Mammary epithelial cell (primary cell): ENCODE measurements at regions of chrX and their contacts with region 1.

Region 1: DNA sequence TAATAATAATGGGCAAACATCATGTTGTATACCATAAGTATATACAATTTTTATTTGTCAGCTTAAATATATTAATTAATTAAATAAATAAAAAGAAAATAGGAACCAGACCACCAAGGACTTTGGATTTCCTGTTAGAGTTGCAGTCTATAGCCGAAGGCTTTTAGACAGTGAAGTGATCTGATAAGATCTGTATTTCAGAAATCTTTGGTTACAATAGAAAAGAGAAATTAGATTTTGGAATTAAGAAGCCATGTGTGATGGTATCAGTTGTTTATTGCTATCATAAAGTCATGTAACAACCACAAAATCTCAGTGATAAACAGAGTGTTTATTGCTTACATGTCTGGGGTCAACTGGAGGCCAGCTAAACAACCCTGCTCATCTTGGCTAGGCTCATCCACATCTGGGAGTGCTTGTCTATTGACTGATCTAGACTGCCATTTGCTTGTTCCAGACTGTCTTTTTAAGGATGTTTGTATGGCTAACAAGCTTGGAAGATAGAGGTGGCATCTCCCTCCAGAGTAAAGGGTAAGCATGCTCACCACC is 142.1 kb upstream of the USP9X start:
- DNase-seq: no peak
- H3K4me3 ChIP-seq: no peak overlapping the region
- H3K27ac ChIP-seq: no peak overlapping the region
- H3K4me1 ChIP-seq: peaks cover 6% of the 10 kb centered on the region
- H3K27me3 ChIP-seq: no peaks in the 10 kb centered on the region
- CTCF ChIP-seq: no peak

Region 2: DNA sequence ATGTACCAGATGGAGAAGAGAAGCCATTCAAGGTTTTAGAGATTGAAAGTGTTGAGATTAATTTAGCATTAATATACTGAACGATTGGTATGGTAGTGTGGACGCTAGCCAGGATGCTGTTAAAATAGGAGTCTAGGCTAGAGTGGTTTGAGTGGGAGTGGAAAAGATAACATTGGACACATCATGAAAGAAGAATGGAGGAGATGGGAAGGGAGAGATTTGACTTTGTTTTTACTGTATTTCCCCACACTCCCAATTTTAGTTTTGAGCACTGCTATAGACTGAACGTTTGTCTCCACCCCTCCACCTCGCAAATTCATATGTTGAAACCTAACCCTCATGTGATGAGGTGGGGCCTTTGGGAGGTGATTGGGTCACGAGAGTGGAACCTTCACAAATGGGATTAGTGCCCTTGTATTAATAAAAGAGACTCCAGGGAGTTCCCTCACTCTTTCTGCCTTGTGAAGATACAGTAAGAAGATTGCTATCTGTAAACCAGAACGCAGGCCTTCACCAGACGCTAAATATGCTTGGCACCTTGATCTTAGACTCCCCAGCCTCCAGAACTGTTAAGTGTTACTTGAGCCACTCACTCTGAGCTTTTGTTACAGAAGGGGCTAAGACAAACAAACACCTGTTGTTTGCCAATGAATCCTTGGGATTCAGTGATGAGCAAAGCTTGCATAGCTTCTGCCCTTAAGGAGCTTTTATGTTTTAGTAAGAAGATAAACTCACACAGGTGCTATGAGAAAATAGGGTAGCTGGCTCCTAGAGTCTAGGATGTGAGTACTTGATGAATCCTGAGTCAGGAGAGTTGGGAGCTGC is 167.8 kb after region 1 on chrX:
- CTCF ChIA-PET with region 1: no interaction called
- dilution Hi-C with region 1: no loop called
- in situ Hi-C with region 1: no loop called
- intact Hi-C with region 1: loop called (anchors 5 kb)
- DNase-seq: no peak
- H3K4me3 ChIP-seq: no peak overlapping the region
- H3K27ac ChIP-seq: no peak overlapping the region
- H3K4me1 ChIP-seq: peaks cover 3% of the 10 kb centered on the region
- H3K27me3 ChIP-seq: no peaks in the 10 kb centered on the region
- CTCF ChIP-seq: no peak